Dendritic cell treated with granulocyte-macrophage colony-stimulating factor and Interleukin-4, amounts not matched to agents 40 ng/mL and 50 ng/mL, for 4 days (primary cell): ENCODE measurements at regions of chr6 and their contacts with region 1.

Region 1: DNA sequence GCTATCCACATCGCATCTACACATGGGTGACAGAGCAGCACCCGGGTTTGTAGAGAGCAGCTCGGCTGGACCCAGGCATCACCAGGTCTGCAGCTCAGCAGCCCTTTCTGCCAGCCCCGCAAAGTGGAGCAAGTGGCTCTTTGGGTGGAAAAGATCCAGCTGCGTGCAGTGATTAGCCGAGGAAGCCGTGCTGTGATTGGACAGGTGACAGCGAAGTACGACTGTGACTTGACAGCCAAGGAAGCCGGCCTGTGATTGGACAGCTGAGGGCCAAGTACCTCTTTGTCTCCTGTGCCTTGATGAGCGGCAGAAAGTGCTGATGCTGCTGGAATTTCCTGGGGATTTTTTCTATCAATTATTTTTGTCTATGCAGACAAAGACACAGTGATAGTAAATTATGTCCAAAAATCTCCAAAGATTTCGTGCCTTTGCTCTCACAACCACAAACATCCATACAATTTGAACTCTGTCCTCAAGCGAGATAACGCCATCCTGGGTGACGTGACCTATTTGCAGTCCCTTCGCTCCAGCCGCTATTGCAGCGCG is 62.3 kb upstream of the GPR31 start:
- H3K4me3 Mint-ChIP-seq: no peak overlapping the region
- H3K27ac Mint-ChIP-seq: no peak overlapping the region
- H3K4me1 Mint-ChIP-seq: no peaks in the 10 kb centered on the region
- H3K27me3 Mint-ChIP-seq: peaks cover under 1% of the 10 kb centered on the region

Region 2: DNA sequence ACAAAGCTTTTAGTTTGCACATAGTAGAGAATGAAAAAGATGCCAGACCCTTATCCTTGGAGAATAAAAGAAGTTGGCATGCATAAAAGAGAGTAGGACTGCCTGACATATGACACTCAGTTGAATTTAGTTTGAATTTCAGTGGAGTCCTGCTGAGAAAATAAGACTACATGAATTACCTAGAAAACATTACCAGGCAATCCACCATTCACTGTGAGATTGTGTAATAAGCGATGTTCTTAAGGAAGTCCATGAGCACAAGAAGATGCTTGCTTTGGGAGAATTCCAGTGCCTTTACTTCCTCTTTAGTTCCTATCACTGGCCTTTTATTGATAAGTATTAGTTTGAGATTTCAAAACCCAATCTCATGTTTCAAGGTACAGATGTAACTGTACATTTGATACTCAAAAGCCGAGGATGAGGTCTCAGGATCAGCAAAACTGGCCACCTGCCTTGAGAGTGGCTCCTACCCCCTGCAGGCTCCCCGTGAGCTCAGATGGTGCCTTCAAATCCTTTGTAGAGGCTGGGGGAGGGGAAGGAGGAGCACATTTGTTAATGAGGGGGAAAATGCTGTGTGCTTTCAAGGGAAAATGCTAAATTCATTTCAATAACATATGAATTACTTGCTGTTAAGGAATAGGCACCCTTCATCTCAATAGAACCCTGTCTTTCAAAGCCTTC is 59.9 kb after region 1 on chr6:
- intact Hi-C with region 1: loop called (anchors 5 kb)
- H3K4me3 Mint-ChIP-seq: no peak overlapping the region
- H3K27ac Mint-ChIP-seq: no peak overlapping the region
- H3K4me1 Mint-ChIP-seq: no peaks in the 10 kb centered on the region
- H3K27me3 Mint-ChIP-seq: peaks cover 1% of the 10 kb centered on the region